ENCODE measurements at regions of chr15 and their contacts with region 1.

Region 1: DNA sequence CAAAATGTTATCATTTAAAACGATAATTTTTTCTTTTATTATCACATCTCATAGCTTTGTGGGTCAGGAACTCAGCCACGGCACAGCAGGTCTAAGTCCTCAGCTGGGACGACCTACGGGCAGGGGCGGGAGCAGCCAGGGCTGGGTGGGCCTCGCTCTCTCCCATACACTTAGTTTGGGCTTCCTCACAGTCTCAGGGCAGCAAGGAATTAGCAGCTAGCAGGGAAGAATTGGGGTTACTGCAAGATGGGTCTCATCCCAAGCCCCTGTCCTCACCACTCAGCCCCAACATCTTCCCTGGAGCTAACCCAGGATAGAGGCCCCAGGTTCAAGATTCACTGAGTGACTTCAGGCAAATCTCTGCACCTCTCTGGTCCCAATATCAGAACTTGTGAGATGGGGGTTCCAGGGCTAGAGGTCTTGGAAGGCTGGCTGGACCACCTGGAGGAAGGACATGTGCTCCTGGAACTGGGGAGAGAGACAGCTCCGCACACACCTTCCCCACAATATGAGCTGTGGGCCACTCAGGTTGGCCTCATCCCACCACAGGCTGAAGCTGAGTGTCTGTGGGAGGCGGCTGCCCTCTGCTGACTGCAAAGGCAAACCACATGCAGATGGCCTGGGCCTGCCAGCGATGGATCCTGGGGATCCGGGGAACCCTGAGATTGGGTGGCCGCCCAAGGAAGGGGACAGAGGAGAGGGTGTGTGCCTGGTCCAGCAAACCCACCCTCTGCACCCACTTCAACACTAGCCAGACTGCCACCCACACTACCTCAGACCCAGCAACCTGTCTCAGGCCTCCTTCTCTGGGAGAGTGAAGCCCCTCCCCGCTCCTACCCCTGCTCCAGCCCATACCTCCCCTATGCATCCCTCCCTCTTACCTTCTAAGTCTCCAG is 45.0 kb downstream of the CYP11A1 start:
- DNase-seq: peak; percentile 51 to 80 (median 72)
- H3K4me3 ChIP-seq: no peak overlapping the region
- H3K27ac ChIP-seq: no peak overlapping the region
- H3K27me3 ChIP-seq: peaks cover 0 to 5% (median 0%) of the 10 kb centered on the region in 45 donors
- CTCF ChIP-seq: peak; percentile 27 to 92 (median 80)

Region 2: DNA sequence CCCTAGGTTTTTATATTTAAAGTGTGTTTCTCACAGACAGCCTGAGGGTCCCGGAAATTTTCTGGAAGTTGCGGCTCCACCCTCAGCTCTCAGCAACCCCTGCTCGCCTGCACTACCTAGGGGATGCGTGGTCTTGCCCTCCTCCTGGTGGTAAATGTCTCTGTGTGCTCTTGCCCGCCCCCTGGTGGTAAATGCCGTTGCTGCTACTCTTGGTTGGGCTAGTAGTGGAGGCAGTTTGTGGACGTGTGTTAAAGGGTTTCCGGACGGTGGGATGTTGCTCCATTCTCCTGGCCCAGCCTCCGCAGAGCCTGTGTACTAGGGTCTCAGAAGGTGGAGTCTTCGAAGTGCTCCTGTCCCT is 357.7 kb before region 1 on chr15:
- intact Hi-C with region 1: loop called (anchors 5 to 10 kb)
- DNase-seq: peak in 8 of 10 donors; percentile 35 to 75 (median 68)
- H3K4me3 ChIP-seq: no peak overlapping the region
- H3K27ac ChIP-seq: no peak overlapping the region
- H3K27me3 ChIP-seq: peaks cover 0 to 6% (median 0%) of the 10 kb centered on the region in 45 donors
- CTCF ChIP-seq: peak; percentile 45 to 93 (median 85)

Region 3: DNA sequence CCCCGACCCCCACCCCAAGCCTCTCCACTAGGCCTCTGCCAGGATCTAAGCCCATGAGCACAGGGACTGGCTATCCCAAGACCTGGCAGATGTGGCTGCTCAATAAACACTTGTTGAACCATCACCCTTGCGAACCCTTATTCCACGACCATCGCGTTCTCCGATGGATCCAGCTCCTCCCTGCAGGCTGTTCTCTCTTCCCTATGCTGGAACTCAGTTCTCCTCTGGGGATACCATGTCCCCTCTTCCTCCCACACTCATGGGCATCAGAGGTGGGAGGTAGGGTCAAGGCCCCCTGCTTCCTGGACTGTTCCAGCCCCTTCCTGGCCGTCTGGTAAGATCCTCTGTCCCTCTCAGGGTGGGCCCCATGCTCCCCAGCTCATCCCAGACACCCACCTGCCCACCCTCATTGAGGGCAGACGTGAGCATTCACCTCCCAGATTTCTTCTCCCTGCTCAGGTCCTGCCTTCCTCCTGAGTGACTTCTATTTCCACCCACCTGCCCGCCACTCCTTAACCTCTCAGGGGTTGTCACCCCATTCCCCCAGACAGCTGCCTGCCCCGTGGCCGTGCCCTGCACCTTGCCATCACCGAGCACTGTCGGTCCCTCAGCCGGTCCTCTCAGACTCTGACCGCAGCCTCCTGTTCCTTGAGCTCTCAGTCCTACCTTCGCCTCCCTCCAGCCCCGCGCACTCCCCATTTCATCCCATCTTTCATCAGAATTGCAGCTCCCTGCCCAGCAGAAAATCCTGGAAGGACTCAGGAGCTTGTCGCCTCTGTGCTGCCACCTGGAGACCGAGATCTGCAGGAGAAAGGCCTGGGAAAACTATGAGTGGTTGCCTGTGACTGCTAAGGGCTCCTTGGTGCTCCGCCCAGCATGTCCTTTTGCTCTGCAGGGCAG is 285.9 kb before region 1 on chr15:
- intact Hi-C with region 1: loop called in 1 of 2 experiments (anchors 10 kb)
- DNase-seq: peak in 7 of 10 donors; percentile 41 to 73 (median 65)
- H3K4me3 ChIP-seq: no peak overlapping the region
- H3K27ac ChIP-seq: peak overlapping the region in 1 of 59 donors; percentile 27
- H3K27me3 ChIP-seq: no peaks in the 10 kb centered on the region
- CTCF ChIP-seq: peak in 53 of 56 donors; percentile 31 to 68 (median 51)

Region 4: GRCh38 chr15:74053941-74054529 is 268.4 kb before region 1 on chr15:
- intact Hi-C with region 1: loop called (anchors 5 to 10 kb)
- DNase-seq: peak in 8 of 10 donors; percentile 39 to 68 (median 50)
- H3K4me3 ChIP-seq: peak overlapping the region in 38 of 59 donors; percentile 6 to 58 (median 34)
- H3K27ac ChIP-seq: peak overlapping the region in 1 of 59 donors; percentile 28
- H3K27me3 ChIP-seq: no peaks in the 10 kb centered on the region
- CTCF ChIP-seq: peak in 54 of 56 donors; percentile 36 to 73 (median 60)

Region 5: GRCh38 chr15:74127260-74127953 is 195.0 kb before region 1 on chr15:
- intact Hi-C with region 1: loop called (anchors 1 to 5 kb)
- DNase-seq: peak; percentile 79 to 94 (median 88)
- H3K4me3 ChIP-seq: peak overlapping the region in 58 of 59 donors; percentile 11 to 62 (median 42)
- H3K27ac ChIP-seq: peak overlapping the region in 6 of 59 donors; percentile 8 to 72 (median 62)
- H3K27me3 ChIP-seq: peaks cover 0 to 62% (median 43%) of the 10 kb centered on the region in 45 donors
- CTCF ChIP-seq: peak; percentile 86 to 100 (median 99)